ENCODE measurements at regions of chr2 and their contacts with region 1.

Region 1: DNA sequence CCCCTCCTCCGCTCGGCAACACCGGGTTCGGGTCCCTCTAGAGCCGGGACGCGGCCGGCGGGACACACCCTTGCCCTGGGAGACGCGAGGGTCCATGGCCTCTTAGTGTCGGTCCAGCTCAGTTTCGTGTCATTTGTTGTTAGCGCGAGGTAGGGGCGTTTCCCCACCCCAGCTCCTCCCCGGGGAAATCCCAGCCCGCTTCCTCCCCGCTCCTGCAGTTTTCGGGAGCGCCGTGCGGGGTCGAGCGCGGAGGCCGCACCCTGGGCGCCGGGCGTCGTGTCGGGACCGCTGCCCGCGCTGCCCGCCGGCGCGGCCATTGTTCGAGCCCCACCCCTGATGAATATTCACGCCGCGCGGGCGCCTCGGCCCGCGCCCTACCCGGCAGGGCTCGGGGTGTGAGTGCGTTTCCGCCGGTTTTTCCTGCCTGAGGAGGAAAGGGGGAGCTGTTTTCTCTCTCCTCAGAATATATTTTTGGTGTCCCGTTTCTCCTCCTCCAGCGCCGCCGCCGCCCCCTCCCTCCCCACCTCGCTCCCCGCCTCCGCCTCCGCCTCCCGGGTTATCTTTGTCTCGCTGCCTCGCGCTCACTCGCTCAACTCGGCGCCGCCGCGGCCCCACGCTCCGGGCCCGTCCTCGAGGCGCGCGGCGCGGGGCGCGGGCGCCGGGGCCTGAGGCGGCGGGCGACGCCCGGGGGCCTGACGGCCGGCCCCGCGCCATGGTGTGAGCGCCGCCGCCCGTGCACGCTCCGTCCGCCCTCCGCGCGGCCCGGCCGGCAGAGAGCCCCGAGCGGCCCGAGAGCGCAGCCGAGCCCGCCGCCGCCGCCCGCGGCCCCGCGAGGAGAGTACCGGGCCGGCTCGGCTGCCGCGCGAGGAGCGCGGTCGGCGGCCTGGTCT is at the start of gene MAP4K4:
- DNase-seq: peak; percentile 84
- ATAC-seq: peak; percentile 84
- H3K4me3 ChIP-seq: peak within 1 kb of the TSS; percentile 82 to 99 (median 97)
- H3K27ac ChIP-seq: peak within 1 kb of the TSS; percentile 74
- H3K4me1 ChIP-seq: peaks cover 48% of the 10 kb centered on the region
- H3K27me3 ChIP-seq: no peaks in the 10 kb centered on the region; a peak in 1 of 5 replicates
- CTCF ChIP-seq: peak; percentile 58
- EP300 ChIP-seq: peak in 1 of 2 experiments; percentile 15; a peak in 1 of 4 replicates
- POLR2A ChIP-seq: peak; percentile 48 to 65; a peak in 3 of 4 replicates
- RAD21 ChIP-seq: peak; percentile 86
- total RNA-seq, gene MAP4K4: 264 and 301 TPM in 2 replicates

Region 2: GRCh38 chr2:101419096-101419663 is 278.2 kb before region 1 on chr2:
- CTCF ChIA-PET with region 1: no interaction called
- POLR2A ChIA-PET with region 1: no interaction called
- in situ Hi-C with region 1: no loop called
- intact Hi-C with region 1: loop called (anchors 1 kb)
- DNase-seq: peak; percentile 71
- ATAC-seq: peak; percentile 85
- H3K4me3 ChIP-seq: no peak overlapping the region
- H3K27ac ChIP-seq: no peak overlapping the region
- H3K4me1 ChIP-seq: no peaks in the 10 kb centered on the region
- H3K27me3 ChIP-seq: peaks cover 3 to 21% of the 10 kb centered on the region in 2 experiments; a peak in 4 of 5 replicates
- CTCF ChIP-seq: peak; percentile 78
- EP300 ChIP-seq: no peak
- POLR2A ChIP-seq: no peak
- RAD21 ChIP-seq: peak; percentile 81

Region 3: DNA sequence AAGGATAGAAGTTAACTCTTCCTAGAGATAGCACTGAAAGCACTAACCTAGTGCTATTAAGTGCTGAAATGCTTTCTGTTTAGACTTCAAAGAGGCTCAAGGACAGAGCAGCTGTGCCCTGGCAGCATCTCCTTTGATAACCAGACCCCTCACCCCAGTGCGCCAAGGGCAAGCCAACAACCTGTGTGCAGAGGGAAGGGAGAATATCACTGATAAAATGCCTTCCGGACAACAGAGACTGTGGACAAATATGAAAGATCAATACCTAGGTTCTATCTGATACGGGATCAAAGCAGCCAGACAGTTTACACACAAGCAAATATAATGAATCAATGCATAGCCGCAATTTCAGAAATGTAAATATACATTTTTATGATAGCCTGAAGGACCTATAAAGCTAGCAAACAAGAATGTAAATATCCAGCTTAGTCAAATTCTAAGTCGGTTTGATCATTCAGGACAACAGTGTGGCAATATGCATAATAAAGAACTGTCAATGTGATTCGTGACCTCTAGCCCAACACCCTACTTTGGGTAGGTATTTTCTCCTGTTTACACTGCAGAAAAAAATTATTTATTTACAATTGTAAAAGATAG is 130.6 kb before region 1 on chr2:
- CTCF ChIA-PET with region 1: no interaction called
- POLR2A ChIA-PET with region 1: interaction called, 46 read pairs
- in situ Hi-C with region 1: no loop called
- intact Hi-C with region 1: loop called (anchors 1 kb)
- DNase-seq: peak; percentile 100
- ATAC-seq: peak; percentile 97
- H3K4me3 ChIP-seq: peak overlapping the region in 1 of 3 experiments; percentile 19; a peak in 1 of 6 replicates
- H3K27ac ChIP-seq: peak overlapping the region; percentile 67
- H3K4me1 ChIP-seq: peaks cover 82% of the 10 kb centered on the region
- H3K27me3 ChIP-seq: no peaks in the 10 kb centered on the region
- CTCF ChIP-seq: peak; percentile 1; the same call in 1 of the 2 replicates
- EP300 ChIP-seq: peak; percentile 98 to 100
- POLR2A ChIP-seq: no peak
- RAD21 ChIP-seq: peak; percentile 32

Region 4: GRCh38 chr2:101710471-101711318 is 13.3 kb after region 1 on chr2:
- CTCF ChIA-PET with region 1: no interaction called
- POLR2A ChIA-PET with region 1: interaction called, 10 read pairs
- in situ Hi-C with region 1: no loop called
- intact Hi-C with region 1: no loop called
- DNase-seq: no peak
- ATAC-seq: peak; percentile 41
- H3K4me3 ChIP-seq: no peak overlapping the region
- H3K27ac ChIP-seq: no peak overlapping the region
- H3K4me1 ChIP-seq: peaks cover 74% of the 10 kb centered on the region
- H3K27me3 ChIP-seq: no peaks in the 10 kb centered on the region
- CTCF ChIP-seq: no peak
- EP300 ChIP-seq: no peak
- POLR2A ChIP-seq: no peak
- RAD21 ChIP-seq: no peak

Region 5: DNA sequence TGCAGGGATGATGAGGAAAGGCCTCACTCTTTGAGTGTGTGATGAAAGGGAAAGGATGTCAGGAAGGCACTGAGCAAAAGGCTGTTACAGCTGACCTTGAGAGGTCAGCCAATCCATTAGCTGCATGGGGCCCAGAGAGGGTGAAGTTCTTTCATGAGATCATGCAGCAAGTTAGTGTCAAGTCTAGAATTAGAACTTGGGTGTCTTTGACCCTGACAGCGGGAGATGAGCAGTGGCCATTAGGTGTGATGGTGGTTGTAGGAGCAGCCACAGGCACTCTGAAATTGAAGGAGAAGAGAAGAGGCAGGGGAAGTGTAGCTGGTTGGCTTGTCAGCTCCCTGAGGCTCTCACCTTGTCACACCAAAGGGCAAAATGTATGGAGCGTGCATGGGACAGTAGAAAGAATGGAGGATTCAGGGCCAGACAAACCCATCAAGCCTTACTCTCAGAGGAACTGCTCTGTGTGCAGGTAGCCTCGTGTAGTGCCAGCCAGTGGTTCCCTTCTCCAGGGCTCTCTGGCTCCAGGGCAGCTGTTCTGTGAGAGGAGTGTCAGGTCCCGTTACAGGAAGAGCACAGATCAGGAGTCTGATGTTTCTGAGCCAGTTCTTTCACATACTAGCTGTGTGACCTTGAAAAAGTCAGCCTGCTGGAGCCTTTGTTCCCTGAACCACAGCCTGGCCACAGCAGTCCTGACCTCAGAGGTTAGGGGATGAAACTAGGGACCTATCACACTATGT is 36.1 kb after region 1 on chr2:
- CTCF ChIA-PET with region 1: no interaction called
- POLR2A ChIA-PET with region 1: interaction called, 15 read pairs
- in situ Hi-C with region 1: no loop called
- intact Hi-C with region 1: loop called (anchors 2 kb)
- DNase-seq: peak; percentile 94
- ATAC-seq: peak; percentile 89
- H3K4me3 ChIP-seq: peak overlapping the region in 1 of 3 experiments; percentile 55; a peak in 2 of 6 replicates
- H3K27ac ChIP-seq: peak overlapping the region; percentile 90
- H3K4me1 ChIP-seq: peaks cover 100% of the 10 kb centered on the region
- H3K27me3 ChIP-seq: no peaks in the 10 kb centered on the region
- CTCF ChIP-seq: peak; percentile 23; the same call in 1 of the 2 replicates
- EP300 ChIP-seq: peak in 1 of 2 experiments; percentile 84; a peak in 3 of 4 replicates
- POLR2A ChIP-seq: peak; percentile 69 to 84; a peak in 3 of 4 replicates
- RAD21 ChIP-seq: peak; percentile 74

Region 6: GRCh38 chr2:101770726-101771125 is 73.4 kb after region 1 on chr2:
- CTCF ChIA-PET with region 1: no interaction called
- POLR2A ChIA-PET with region 1: interaction called, 16 read pairs
- in situ Hi-C with region 1: no loop called
- intact Hi-C with region 1: loop called (anchors 1 kb)
- DNase-seq: peak; percentile 82
- ATAC-seq: peak; percentile 17
- H3K4me3 ChIP-seq: no peak overlapping the region; a peak in 1 of 6 replicates
- H3K27ac ChIP-seq: peak overlapping the region; percentile 65
- H3K4me1 ChIP-seq: peaks cover 100% of the 10 kb centered on the region
- H3K27me3 ChIP-seq: no peaks in the 10 kb centered on the region
- CTCF ChIP-seq: peak; percentile 80
- EP300 ChIP-seq: no peak
- POLR2A ChIP-seq: no peak
- RAD21 ChIP-seq: peak; percentile 58; the same call in 1 of the 2 replicates

Region 7: GRCh38 chr2:101831351-101831865 is 134.0 kb after region 1 on chr2:
- CTCF ChIA-PET with region 1: no interaction called
- POLR2A ChIA-PET with region 1: no interaction called
- in situ Hi-C with region 1: no loop called
- intact Hi-C with region 1: loop called (anchors 1 kb)
- DNase-seq: peak; percentile 77
- ATAC-seq: peak; percentile 92
- H3K4me3 ChIP-seq: no peak overlapping the region
- H3K27ac ChIP-seq: peak overlapping the region; percentile 3
- H3K4me1 ChIP-seq: peaks cover 50% of the 10 kb centered on the region
- H3K27me3 ChIP-seq: no peaks in the 10 kb centered on the region
- CTCF ChIP-seq: peak; percentile 87
- EP300 ChIP-seq: no peak
- POLR2A ChIP-seq: no peak
- RAD21 ChIP-seq: peak; percentile 71